Activated T-helper 1 cell treated with anti-CD3 and anti-CD28 coated beads, Interleukin-12 subunit alpha, Interleukin-12 subunit beta, Interleukin-2, Interleukin-4 antibody, amounts not matched to agents 30 ng/mL and 10 ng/mL and 1 ng/mL, durations not matched to agents 14 hours and 24 hours and 36 hours (primary cell): ENCODE measurements at regions of chr15 and their contacts with region 1.

Region 1: DNA sequence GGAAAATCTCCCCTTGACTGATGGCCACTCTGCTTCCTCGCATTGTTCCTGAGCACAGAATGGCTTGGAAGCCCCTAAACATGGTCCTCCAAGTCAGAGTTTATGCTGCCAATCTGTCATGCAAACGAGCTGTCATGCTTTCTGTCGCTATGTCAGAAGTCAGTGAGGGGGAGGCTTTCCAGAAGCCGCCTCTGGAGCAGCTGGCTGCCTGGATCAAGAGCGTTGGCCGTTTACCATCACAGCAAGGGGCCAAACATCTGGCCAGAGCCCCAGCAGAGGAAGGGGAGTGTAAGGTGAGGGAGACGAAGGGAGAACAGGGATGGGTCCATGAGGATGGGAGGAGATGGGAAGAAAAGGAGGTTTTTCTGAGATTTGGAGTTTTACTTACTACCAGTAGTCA is 372.6 kb upstream of the NR2F2 start:
- DNase-seq: no peak
- H3K4me3 Mint-ChIP-seq: no peak overlapping the region
- H3K27ac Mint-ChIP-seq: no peak overlapping the region
- H3K4me1 Mint-ChIP-seq: no peaks in the 10 kb centered on the region
- H3K27me3 Mint-ChIP-seq: peaks cover 2% of the 10 kb centered on the region

Region 2: GRCh38 chr15:95894367-95894962 is 63.4 kb before region 1 on chr15:
- intact Hi-C with region 1: loop called (anchors 10 kb)
- DNase-seq: no peak
- H3K4me3 Mint-ChIP-seq: no peak overlapping the region
- H3K27ac Mint-ChIP-seq: no peak overlapping the region
- H3K4me1 Mint-ChIP-seq: no peaks in the 10 kb centered on the region
- H3K27me3 Mint-ChIP-seq: peaks cover 20% of the 10 kb centered on the region